H1 (cell line): ENCODE measurements at regions of chr21 and their contacts with region 1.

Region 1: GRCh38 chr21:37916310-37917051 is at the start of gene KCNJ6:
- DNase-seq: peak in 1 of 2 experiments; percentile 91
- H3K4me3 ChIP-seq: peak within 1 kb of the TSS; percentile 64 to 76 (median 66)
- H3K27ac ChIP-seq: no peak within 1 kb of the TSS
- H3K4me1 ChIP-seq: peaks cover 3 to 16% (median 8%) of the 10 kb centered on the region in 4 experiments; a peak in 6 of 7 replicates
- H3K27me3 ChIP-seq: peaks cover 9 to 17% (median 16%) of the 10 kb centered on the region in 4 experiments
- CTCF ChIP-seq: peak; percentile 77 to 92 (median 83)
- EP300 ChIP-seq: no peak
- POLR2A ChIP-seq: no peak
- RAD21 ChIP-seq: peak; percentile 83
- total RNA-seq, gene KCNJ6: 0.78 and 1.2 TPM in 2 replicates

Region 2: DNA sequence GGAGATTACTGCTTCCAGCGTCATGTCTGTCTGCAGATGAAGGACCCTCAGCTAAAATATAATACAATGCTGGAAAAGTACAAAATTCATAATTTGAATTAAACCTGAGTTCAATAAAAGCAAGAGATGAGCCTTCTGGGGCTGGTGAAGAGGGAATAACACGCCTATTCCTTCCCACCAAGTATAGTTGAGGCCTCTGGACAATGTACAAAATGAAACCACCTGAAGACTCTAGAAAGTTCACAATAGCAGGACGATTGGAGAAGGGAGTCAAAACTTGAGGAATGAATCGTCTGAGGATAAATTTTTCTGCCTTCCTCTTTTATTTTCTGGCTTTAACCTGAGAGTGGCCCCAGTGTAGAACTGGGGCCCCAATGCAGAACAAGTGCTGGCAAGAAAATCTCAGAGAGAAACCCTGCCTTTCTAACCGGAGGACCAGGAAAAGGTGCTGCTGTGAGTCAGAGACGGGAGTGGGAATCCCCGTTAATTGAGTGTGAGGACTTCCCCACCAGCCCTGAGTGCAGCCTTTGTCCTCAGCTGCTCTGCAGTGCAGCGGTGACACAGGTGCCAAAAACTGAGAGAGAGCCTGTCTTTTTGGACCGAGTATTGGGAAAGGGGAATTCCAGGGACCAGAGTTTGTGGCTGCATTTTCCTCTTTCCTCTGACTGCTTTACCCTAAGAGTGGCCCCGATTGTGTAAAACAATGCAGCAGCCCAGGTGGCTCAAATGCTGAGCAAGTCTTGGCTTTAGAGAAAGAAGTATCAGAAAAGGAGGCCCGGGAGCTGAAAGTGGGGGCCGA is 285.0 kb before region 1 on chr21:
- CTCF ChIA-PET with region 1: no interaction called
- POLR2A ChIA-PET with region 1: no interaction called
- DNase-seq: peak; percentile 33 to 58
- H3K4me3 ChIP-seq: peak overlapping the region in 3 of 4 experiments; percentile 16 to 33 (median 18); a peak in 3 of 8 replicates
- H3K27ac ChIP-seq: peak overlapping the region; percentile 80
- H3K4me1 ChIP-seq: peaks cover 2 to 14% (median 11%) of the 10 kb centered on the region in 4 experiments; a peak in 4 of 7 replicates
- H3K27me3 ChIP-seq: no peaks in the 10 kb centered on the region
- CTCF ChIP-seq: no peak
- EP300 ChIP-seq: peak in 1 of 2 experiments; percentile 88; a peak in 2 of 3 replicates
- POLR2A ChIP-seq: peak in 1 of 2 experiments; percentile 53; a peak in 1 of 3 replicates
- RAD21 ChIP-seq: peak in 1 of 2 experiments; percentile 33; a peak in 2 of 4 replicates

Region 3: DNA sequence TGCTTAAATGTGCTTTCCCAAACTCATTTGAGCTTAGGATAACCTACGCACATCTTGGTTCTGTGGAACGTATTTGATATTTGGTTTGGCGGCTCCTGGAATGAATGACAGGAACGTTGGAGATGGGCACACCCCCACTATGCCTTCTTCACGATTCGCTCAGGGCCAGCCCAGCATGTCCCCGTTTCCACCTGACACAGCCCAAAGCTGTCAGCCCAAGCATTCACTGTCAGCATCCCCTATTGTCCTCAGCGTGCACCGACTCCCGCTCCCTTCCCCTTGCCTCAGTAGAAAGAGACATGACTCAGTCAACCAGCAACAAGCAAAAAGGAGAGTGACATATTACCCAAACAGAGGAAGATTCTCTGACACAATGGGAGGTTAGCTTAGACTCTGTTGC is 181.6 kb before region 1 on chr21:
- CTCF ChIA-PET with region 1: no interaction called
- POLR2A ChIA-PET with region 1: no interaction called
- DNase-seq: no peak
- H3K4me3 ChIP-seq: no peak overlapping the region
- H3K27ac ChIP-seq: no peak overlapping the region
- H3K4me1 ChIP-seq: peaks cover 0 to 4% (median 0%) of the 10 kb centered on the region in 4 experiments; a peak in 1 of 7 replicates
- H3K27me3 ChIP-seq: no peaks in the 10 kb centered on the region
- CTCF ChIP-seq: no peak
- EP300 ChIP-seq: no peak
- POLR2A ChIP-seq: no peak
- RAD21 ChIP-seq: no peak

Region 4: DNA sequence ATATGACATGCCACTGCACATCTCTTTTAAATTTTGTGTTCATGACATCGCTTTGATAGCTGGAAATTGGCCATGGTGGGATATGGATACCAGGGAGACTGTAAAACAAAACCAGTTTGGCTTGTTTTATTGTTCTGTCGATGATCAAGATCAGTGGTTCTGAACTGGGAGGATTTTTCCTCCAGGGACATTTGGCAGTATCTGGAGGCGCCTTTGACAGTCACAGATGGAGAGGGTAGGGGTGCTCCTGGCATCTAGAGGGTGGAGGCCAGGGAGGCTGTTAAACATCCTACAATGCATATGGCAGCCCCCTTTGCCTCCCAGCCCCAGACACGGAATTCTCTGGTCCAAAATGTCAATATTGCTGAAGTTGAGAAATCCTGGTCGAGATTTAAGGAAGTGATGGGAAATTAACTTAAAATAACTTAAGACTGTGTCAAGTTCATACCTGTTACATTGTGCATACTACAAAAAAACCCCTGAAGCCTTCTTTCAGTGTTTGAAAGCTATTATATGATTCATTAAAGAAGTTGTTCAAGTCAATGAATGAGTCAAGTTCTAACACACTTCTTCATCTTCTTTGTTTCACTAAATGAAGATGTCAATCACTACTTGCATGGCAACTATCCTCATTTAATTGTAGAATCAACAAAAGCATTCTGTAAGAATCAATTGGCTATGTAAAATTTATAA is 151.1 kb before region 1 on chr21:
- CTCF ChIA-PET with region 1: interaction called, 54 read pairs
- POLR2A ChIA-PET with region 1: no interaction called
- DNase-seq: no peak
- H3K4me3 ChIP-seq: no peak overlapping the region
- H3K27ac ChIP-seq: no peak overlapping the region
- H3K4me1 ChIP-seq: peaks cover 0 to 2% (median 0%) of the 10 kb centered on the region in 4 experiments; a peak in 1 of 7 replicates
- H3K27me3 ChIP-seq: no peaks in the 10 kb centered on the region
- CTCF ChIP-seq: no peak
- EP300 ChIP-seq: no peak
- POLR2A ChIP-seq: no peak
- RAD21 ChIP-seq: no peak